Caco-2 (cell line): ENCODE measurements at regions of chr17 and their contacts with region 1.

Region 1: GRCh38 chr17:32253117-32253611 is 12.5 kb upstream of the RHBDL3 start:
- DNase-seq: peak; percentile 80 to 86
- H3K4me3 ChIP-seq: no peak overlapping the region
- H3K4me3 Mint-ChIP-seq: no peak overlapping the region
- H3K27ac Mint-ChIP-seq: no peak overlapping the region
- H3K4me1 ChIP-seq: no peaks in the 10 kb centered on the region
- H3K4me1 Mint-ChIP-seq: no peaks in the 10 kb centered on the region
- H3K27me3 ChIP-seq: no peaks in the 10 kb centered on the region
- H3K27me3 Mint-ChIP-seq: no peaks in the 10 kb centered on the region
- CTCF ChIP-seq: peak; percentile 98 to 99

Region 2: DNA sequence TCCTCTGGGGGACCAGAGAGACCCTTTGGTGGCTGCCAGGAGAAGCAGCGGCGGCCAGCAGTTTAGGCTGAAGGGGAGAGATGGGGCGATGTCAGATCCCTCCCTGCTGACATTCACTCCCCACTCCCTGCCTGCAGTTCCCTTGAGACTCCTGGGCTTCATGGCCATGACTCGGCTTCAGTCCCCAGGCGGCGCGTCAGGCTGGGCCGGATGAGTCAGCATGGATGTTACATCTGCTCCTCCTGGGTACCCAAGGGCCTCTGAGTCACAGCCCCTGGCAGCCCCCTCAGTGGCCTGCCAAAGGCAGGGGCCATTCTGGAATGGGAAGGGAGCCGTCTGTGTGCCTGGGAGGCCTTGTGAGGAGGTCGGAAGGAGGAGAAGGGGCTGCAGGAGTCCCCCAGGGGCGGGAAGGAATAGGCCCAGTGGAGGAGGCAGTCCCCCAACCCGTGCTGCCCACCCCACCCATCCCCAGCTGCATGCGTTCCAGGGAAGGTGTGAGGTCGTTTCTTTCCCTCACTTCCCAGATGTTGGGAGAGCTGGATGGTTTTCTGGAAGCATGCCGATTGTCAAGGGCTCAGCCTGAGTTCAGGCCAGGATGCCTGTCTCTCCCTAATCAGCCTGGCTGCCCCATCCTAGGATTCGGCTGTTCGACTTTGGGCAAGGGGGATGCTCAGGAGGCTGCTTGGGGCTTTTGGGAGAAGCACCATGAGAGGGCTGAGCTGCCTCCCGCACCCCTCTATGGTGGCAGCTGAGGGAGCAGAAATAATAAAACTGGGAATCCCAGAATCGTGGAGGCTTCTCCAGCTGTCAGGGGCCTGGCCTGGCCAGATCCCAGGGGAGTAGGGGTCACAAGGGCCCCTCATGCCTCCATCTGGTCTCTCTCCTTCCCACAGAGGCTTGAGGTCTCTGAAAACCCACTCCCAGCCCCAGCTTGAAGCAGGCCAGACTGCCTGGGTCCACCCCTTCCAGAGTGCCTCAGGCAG is 22.2 kb after region 1 on chr17:
- CTCF ChIA-PET with region 1: no interaction called
- POLR2A ChIA-PET with region 1: no interaction called
- intact Hi-C with region 1: no loop called
- DNase-seq: no peak
- H3K4me3 ChIP-seq: no peak overlapping the region
- H3K4me3 Mint-ChIP-seq: no peak overlapping the region
- H3K27ac Mint-ChIP-seq: no peak overlapping the region
- H3K4me1 ChIP-seq: no peaks in the 10 kb centered on the region
- H3K4me1 Mint-ChIP-seq: no peaks in the 10 kb centered on the region
- H3K27me3 ChIP-seq: no peaks in the 10 kb centered on the region
- H3K27me3 Mint-ChIP-seq: peaks cover 2% of the 10 kb centered on the region
- CTCF ChIP-seq: no peak

Region 3: GRCh38 chr17:32319548-32319905 is 66.4 kb after region 1 on chr17:
- CTCF ChIA-PET with region 1: interaction called, 6 read pairs
- POLR2A ChIA-PET with region 1: no interaction called
- intact Hi-C with region 1: loop called (anchors 1 kb)
- DNase-seq: peak; percentile 78 to 90
- H3K4me3 ChIP-seq: no peak overlapping the region
- H3K4me3 Mint-ChIP-seq: no peak overlapping the region
- H3K27ac Mint-ChIP-seq: no peak overlapping the region
- H3K4me1 ChIP-seq: no peaks in the 10 kb centered on the region
- H3K4me1 Mint-ChIP-seq: peaks cover 8% of the 10 kb centered on the region
- H3K27me3 ChIP-seq: no peaks in the 10 kb centered on the region
- H3K27me3 Mint-ChIP-seq: peaks cover 2% of the 10 kb centered on the region
- CTCF ChIP-seq: peak; percentile 98 to 99

Region 4: DNA sequence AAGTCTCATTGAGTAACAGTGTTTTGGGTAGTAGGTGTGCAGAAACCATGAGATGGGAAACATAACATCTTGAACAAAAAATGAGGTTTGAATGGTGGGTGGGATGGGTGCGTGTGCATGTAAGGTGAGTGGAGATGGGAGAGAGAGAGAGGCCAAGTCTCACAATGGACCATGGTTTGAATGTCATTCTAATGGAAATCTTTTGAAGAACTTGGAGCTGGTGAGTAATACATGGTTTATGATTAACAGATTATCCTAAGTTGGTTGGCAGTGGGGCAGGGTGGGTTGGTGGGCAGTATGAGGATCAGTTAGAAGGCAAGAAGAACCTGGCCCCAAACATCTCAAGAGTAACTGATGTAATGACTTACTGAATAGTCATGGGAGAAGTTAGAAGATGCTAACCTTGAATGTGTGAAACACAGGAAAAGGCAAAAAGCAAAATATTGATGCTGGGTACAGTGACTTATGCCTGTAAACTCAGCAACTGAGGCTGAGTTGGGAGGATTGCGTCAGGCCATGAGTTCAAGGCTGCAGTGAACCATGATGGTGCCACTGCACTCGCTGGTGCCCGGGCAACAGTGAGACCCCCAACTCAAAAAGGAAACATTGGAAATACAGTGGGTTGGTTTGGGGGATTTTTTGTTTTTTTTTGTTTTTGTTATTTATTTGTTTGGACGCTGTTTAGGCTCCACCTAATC is 129.5 kb after region 1 on chr17:
- CTCF ChIA-PET with region 1: no interaction called
- POLR2A ChIA-PET with region 1: no interaction called
- intact Hi-C with region 1: loop called (anchors 5 kb)
- DNase-seq: no peak
- H3K4me3 ChIP-seq: no peak overlapping the region
- H3K4me3 Mint-ChIP-seq: no peak overlapping the region
- H3K27ac Mint-ChIP-seq: no peak overlapping the region
- H3K4me1 ChIP-seq: peaks cover 27% of the 10 kb centered on the region
- H3K4me1 Mint-ChIP-seq: peaks cover 38% of the 10 kb centered on the region
- H3K27me3 ChIP-seq: no peaks in the 10 kb centered on the region
- H3K27me3 Mint-ChIP-seq: no peaks in the 10 kb centered on the region
- CTCF ChIP-seq: no peak